IMR-90 (cell line): ENCODE measurements at regions of chr18 and their contacts with region 1.

Region 1: DNA sequence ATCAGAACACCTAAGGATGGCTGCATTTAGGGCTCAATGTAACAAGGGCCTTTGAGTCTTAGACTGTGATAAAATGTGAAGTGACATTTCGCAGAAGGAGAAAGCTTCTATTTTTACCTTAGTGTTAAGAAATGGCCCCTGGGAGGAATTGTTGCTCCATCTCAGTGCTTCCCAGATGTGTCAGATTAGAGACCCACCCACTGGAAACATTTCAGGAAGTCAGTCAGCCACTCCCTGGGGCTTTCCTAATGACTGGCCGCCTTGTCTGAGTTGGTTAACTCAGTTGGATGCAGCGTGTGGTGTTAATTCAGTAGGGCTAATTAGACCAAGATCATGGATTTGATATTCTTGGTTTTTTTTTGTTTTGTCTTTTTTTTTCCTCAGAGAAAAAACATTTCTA is 355.9 kb downstream of the PIK3C3 start:
- DNase-seq: no peak
- ATAC-seq: no peak
- H3K4me3 ChIP-seq: no peak overlapping the region
- H3K27ac ChIP-seq: no peak overlapping the region
- H3K4me1 ChIP-seq: no peaks in the 10 kb centered on the region
- H3K27me3 ChIP-seq: no peaks in the 10 kb centered on the region
- CTCF ChIP-seq: no peak
- POLR2A ChIP-seq: no peak
- RAD21 ChIP-seq: no peak

Region 2: DNA sequence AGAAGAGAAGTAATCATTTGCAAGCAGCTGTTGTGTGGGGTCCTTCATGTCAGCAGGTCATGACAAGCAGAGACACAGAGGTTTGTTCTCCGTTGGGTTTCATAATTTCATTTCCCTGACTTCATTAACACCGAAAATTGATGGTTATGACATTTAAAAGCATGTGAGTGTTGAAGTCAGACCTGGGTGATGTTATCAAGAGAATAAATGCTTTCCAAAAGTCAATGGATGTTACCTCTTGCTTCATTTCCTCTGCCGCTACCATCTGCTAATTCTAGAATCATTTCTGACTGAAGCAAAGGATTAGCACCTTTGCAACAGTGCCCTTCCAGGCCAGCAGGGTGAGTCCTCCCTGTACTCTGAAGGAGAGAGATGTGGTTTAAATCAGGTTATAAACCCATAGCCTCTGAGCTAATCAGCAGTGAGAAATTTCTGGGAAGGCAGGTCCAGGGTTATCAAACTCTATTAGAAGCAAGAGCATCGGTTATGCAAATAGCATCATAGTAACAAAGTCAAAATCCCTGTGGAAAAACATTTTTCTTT is 90.2 kb after region 1 on chr18:
- CTCF ChIA-PET with region 1: no interaction called
- POLR2A ChIA-PET with region 1: no interaction called
- dilution Hi-C with region 1: no loop called
- in situ Hi-C with region 1: no loop called
- intact Hi-C with region 1: no loop called
- DNase-seq: no peak
- ATAC-seq: no peak
- H3K4me3 ChIP-seq: no peak overlapping the region
- H3K27ac ChIP-seq: no peak overlapping the region
- H3K4me1 ChIP-seq: no peaks in the 10 kb centered on the region
- H3K27me3 ChIP-seq: no peaks in the 10 kb centered on the region
- CTCF ChIP-seq: no peak
- POLR2A ChIP-seq: no peak
- RAD21 ChIP-seq: no peak

Region 3: GRCh38 chr18:43271593-43272432 is 960.9 kb after region 1 on chr18:
- CTCF ChIA-PET with region 1: no interaction called
- POLR2A ChIA-PET with region 1: no interaction called
- dilution Hi-C with region 1: no loop called
- in situ Hi-C with region 1: loop called (anchors 25 kb)
- intact Hi-C with region 1: no loop called
- DNase-seq: peak; percentile 61
- ATAC-seq: peak; percentile 72
- H3K4me3 ChIP-seq: no peak overlapping the region
- H3K27ac ChIP-seq: no peak overlapping the region
- H3K4me1 ChIP-seq: no peaks in the 10 kb centered on the region
- H3K27me3 ChIP-seq: no peaks in the 10 kb centered on the region
- CTCF ChIP-seq: peak; percentile 70
- POLR2A ChIP-seq: no peak
- RAD21 ChIP-seq: peak; percentile 61

Region 4: DNA sequence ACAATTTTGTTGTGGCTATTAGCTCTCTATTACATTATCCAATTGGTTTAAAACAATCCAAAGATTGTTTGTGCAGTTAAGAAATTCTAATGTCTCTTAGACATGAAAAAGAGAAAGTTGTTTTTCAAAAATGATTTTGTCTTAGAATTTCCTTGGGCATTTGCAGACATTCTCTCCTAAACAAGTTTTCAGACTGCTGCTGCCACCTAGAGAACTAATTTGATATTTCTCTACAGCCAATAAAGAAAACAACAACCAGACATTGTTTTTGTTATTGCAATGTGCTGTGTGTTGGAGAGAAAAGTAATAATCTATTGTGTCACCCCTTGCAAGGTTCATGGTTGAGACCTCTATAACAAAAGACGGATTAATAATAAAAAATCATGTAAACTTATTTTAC is 1085.3 kb after region 1 on chr18:
- CTCF ChIA-PET with region 1: no interaction called
- POLR2A ChIA-PET with region 1: no interaction called
- dilution Hi-C with region 1: no loop called
- in situ Hi-C with region 1: no loop called
- intact Hi-C with region 1: loop called (anchors 10 kb)
- DNase-seq: no peak
- ATAC-seq: no peak
- H3K4me3 ChIP-seq: no peak overlapping the region
- H3K27ac ChIP-seq: no peak overlapping the region
- H3K4me1 ChIP-seq: no peaks in the 10 kb centered on the region
- H3K27me3 ChIP-seq: no peaks in the 10 kb centered on the region
- CTCF ChIP-seq: 0 out of 2 replicates have a peak, but pooled peaks have one; percentile 23
- POLR2A ChIP-seq: no peak
- RAD21 ChIP-seq: 0 out of 2 replicates have a peak, but pooled peaks have one; percentile 10